Right ventricle myocardium inferior (tissue), 1 donor: ENCODE measurements at regions of chr5 and their contacts with region 1.

Region 1: GRCh38 chr5:142922223-142922952 is 152.2 kb downstream of the ARHGAP26 start:
- DNase-seq: no peak
- ATAC-seq: peak; percentile 65

Region 2: GRCh38 chr5:142998316-142999020 is 76.1 kb after region 1 on chr5:
- intact Hi-C with region 1: no loop called
- DNase-seq: no peak
- ATAC-seq: no peak

Region 3: GRCh38 chr5:143063175-143063970 is 141.0 kb after region 1 on chr5:
- intact Hi-C with region 1: loop called (anchors 5 kb)
- DNase-seq: peak; percentile 91
- ATAC-seq: peak; percentile 86

Region 4: DNA sequence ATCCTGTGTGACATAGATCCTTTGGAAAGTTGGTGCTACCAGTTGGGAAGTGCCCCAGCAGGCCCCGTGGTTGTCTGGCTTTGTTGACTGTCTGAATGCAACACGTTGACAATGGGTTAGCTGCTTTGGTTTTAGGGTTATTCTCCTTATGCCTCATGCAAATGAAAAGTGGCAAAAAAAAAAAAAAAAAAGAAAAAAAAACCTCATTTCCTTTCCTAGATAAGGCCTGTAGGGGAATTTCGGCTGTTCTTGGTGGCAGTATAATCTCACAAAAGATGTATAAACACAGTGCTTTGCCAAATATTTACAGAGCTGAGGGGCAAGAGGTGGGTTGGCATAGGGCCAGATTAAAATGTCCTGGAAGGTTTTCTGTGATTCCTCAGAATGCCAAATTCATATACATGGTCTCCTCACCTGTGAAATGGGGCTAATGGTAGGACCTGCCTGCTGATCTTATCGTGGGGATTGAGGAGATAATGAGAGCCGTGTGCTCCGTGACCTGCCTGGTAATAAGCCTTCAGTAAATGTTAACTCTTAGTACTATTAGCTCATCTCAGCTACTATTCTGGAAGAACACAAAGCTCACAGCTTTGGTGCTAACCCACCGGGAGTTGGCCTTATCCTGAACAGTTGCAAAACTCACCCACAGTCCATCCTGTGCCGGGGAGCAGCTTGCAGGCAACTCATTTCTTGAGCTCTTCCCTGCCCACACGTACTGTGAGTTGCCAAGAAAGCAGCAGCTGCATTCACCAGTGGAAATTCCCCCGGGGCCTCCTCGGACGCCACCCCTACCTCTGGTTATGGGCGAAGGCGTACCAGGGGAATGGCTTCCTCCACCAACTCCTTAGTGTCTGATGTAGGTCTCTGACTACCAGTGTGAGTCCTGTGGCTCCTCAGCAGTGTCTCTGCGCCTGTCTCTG is 260.8 kb after region 1 on chr5:
- intact Hi-C with region 1: loop called (anchors 10 kb)
- DNase-seq: peak; percentile 73
- ATAC-seq: peak; percentile 81

Region 5: GRCh38 chr5:143314659-143315058 is 392.3 kb after region 1 on chr5:
- intact Hi-C with region 1: loop called (anchors 10 kb)
- DNase-seq: no peak
- ATAC-seq: no peak